ENCODE measurements at regions of chr17 and their contacts with region 1.

Region 1: DNA sequence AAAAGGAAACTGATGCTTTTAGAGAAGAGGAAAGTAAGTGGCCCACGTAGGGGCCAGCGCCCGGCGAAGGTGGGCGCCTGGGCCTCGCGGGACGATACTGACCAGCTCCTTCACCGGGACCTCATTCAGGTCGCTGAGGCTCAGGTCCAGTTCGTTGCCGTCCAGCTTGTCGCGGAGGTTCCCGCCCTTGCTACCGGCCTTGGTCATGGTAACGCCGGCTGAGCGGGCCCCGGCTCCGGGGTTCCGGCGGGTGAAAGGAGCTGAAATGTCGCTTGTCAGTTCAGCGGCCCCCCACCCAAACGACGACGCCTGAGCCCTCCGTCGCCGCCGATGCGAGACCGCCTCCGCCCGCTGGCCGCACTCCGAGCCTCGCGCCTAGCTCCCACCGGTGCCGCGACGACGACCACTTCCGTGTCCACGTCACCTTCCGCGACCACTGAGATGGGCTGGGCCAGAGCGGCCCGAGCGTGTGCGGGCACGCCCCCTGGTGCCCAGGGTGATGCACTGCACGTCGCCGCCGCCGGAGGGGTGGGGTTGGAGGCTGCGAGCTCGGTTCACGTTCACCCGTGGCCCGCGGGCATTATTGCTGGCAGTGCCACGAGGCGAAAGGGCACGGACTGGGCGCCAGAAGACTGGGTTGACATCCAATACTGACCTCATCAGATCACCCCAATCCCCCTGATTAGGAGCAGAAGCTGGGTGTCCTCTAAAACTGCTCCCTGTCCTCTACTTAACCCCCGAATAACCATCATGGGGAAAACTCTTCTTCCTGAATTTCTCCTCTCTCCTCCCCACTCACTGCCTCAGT is at the start of gene LRRC59:
- DNase-seq: peak; percentile 95
- ATAC-seq: peak; percentile 95
- H3K4me3 Mint-ChIP-seq: peak within 1 kb of the TSS; percentile 93
- H3K27ac Mint-ChIP-seq: peak within 1 kb of the TSS; percentile 88
- H3K4me1 Mint-ChIP-seq: peaks cover 33% of the 10 kb centered on the region
- H3K27me3 Mint-ChIP-seq: no peaks in the 10 kb centered on the region
- total RNA-seq, gene LRRC59: 74.4 to 82.7 TPM

Region 2: DNA sequence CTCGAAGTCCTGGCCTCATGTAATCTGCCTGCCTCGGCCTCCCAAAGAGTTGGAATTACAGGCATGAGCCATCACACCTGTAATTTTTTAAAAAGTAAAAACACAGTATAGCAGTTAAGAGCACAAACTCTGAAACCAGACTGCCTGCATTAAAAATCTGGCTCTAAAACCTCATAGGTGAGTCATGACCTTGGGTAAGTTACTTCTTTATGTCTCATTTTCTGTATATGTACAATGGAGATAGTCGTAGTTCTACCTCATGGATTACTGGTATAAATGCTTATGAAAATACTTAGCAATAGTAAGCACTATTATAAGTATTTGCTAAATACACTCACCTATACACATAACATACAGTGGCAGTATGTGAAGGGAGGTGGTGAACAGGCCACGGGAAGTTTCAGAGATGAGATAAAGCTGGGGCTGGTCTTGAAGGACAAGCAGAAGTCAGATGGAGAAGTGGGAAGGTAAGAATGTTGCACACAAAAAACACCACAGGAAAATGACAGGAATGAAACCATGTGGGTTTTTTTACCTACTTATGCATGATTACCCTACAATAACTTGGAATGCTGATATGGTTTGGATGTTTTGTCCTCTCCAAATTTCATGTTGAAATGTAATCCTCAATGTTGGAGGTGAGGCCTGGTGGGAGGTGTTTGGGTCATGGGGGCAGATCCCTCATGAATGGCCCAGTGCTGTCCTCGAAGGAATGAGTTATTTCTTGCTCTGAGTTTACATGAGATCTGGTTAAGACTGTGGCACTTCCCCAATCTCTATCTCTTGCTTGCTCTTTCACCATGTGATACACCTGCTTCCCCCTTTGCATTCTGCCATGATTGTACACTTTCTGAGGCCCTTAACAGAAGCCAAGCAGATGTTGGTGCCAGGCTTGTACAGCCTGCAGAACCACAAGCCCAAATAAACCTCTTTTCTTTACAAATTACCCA is 1069.2 kb before region 1 on chr17:
- CTCF ChIA-PET with region 1: no interaction called
- POLR2A ChIA-PET with region 1: no interaction called
- intact Hi-C with region 1: no loop called
- DNase-seq: peak; percentile 19
- ATAC-seq: peak; percentile 92
- H3K4me3 Mint-ChIP-seq: no peak overlapping the region
- H3K27ac Mint-ChIP-seq: peak overlapping the region; percentile 67
- H3K4me1 Mint-ChIP-seq: peaks cover 44% of the 10 kb centered on the region
- H3K27me3 Mint-ChIP-seq: no peaks in the 10 kb centered on the region

Region 3: GRCh38 chr17:50304781-50305404 is 92.4 kb before region 1 on chr17:
- CTCF ChIA-PET with region 1: no interaction called
- POLR2A ChIA-PET with region 1: no interaction called
- intact Hi-C with region 1: no loop called
- DNase-seq: peak; percentile 31
- ATAC-seq: no peak
- H3K4me3 Mint-ChIP-seq: no peak overlapping the region
- H3K27ac Mint-ChIP-seq: no peak overlapping the region
- H3K4me1 Mint-ChIP-seq: peaks cover 21% of the 10 kb centered on the region
- H3K27me3 Mint-ChIP-seq: peaks cover 6% of the 10 kb centered on the region

Region 4: DNA sequence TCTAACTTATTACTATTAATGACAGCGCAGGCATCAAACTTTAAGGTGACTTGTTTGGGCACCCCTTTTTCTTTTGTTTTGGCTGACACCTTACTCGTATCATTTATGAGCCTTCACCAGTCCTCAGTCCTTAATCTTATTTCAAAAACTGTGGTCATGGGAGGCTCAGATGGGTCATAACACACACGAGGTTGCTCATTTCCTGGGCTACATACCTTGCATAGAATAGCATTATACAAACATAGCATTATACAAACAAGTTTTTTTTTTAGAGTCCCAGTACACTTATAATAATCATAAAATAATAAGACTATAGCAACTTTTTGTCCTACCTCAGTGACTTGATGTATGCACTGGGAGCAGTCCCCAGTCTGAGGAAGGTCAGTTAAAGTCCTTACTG is 17.5 kb after region 1 on chr17:
- CTCF ChIA-PET with region 1: interaction called, 11 read pairs
- POLR2A ChIA-PET with region 1: no interaction called
- intact Hi-C with region 1: no loop called
- DNase-seq: no peak
- ATAC-seq: no peak
- H3K4me3 Mint-ChIP-seq: no peak overlapping the region
- H3K27ac Mint-ChIP-seq: no peak overlapping the region
- H3K4me1 Mint-ChIP-seq: no peaks in the 10 kb centered on the region
- H3K27me3 Mint-ChIP-seq: peaks cover 5% of the 10 kb centered on the region

Region 5: GRCh38 chr17:50425682-50426471 is 28.6 kb after region 1 on chr17 and contains the start of gene ACSF2:
- CTCF ChIA-PET with region 1: interaction called, 22 read pairs
- POLR2A ChIA-PET with region 1: interaction called, 4 read pairs
- intact Hi-C with region 1: loop called in 1 of 2 experiments (anchors 1 kb)
- DNase-seq: peak; percentile 86
- ATAC-seq: peak; percentile 84
- H3K4me3 Mint-ChIP-seq: peak within 1 kb of the TSS; percentile 76
- H3K27ac Mint-ChIP-seq: peak within 1 kb of the TSS; percentile 70
- H3K4me1 Mint-ChIP-seq: peaks cover 32% of the 10 kb centered on the region
- H3K27me3 Mint-ChIP-seq: no peaks in the 10 kb centered on the region
- total RNA-seq, gene ACSF2: 15.0 to 15.7 TPM